GM12878 (cell line): ENCODE measurements at regions of chr12 and their contacts with region 1.

Region 1: DNA sequence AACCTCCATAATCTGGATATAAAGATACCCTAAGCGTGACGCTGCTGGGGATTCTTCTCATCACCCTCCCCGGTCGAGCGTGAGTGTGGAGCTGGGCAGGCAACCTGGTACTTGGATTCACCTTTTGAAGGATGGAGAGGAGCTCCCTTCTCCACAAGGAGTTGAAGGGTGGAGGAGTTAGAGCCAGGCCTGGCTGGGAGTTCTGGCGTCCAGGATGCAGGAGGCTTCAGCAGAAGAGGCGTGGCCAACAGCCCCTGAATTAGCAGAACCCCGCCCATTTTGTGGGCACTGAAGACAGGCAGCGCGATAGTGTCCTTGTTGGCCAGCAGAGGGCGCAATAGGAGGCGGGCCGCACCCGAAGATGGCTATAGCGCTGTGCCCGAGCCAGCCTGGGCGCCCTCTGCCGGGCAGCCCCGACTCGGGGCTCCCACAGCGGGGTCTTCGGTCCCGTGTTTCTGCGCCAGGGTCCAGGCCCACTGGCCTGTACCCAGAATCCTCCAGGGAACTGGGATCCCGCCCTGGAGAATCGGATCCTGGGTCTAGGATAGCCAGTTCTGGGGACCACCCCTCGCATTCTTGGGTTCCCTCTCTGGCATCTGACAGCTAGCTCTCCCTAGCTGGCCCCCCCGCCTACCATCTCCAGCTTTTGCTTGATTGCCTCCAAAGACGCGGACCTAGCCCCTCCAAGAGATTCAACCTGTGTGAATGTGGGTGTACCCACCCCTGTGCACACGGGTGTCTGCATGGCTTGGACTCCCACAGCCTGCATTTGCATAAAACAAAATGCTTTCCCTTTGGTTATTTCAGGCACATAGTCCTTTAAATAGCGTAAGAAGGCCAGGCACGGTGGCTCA is 26.0 kb upstream of the SMUG1 start:
- DNase-seq: peak; percentile 59
- ATAC-seq: peak; percentile 87
- H3K4me3 ChIP-seq: peak overlapping the region; percentile 46; the same call in 1 of the 2 replicates
- H3K27ac ChIP-seq: peak overlapping the region; percentile 39
- H3K4me1 ChIP-seq: peaks cover 33% of the 10 kb centered on the region
- H3K27me3 ChIP-seq: peaks cover 0 to 1% of the 10 kb centered on the region in 2 experiments; a peak in 1 of 4 replicates
- CTCF ChIP-seq: peak; percentile 99 to 100 (median 99); a peak in 5 of 6 replicates
- EP300 ChIP-seq: no peak
- POLR2A ChIP-seq: no peak
- RAD21 ChIP-seq: peak; percentile 50; the same call in 1 of the 2 replicates

Region 2: GRCh38 chr12:53757095-53757770 is 457.5 kb before region 1 on chr12:
- CTCF ChIA-PET with region 1: interaction called, 14 read pairs
- POLR2A ChIA-PET with region 1: no interaction called
- RAD21 ChIA-PET with region 1: no interaction called
- SMC1A ChIA-PET with region 1: interaction called, 3 read pairs
- in situ Hi-C with region 1: no loop called
- intact Hi-C with region 1: loop called (anchors 10 kb)
- DNase-seq: no peak
- ATAC-seq: peak; percentile 74
- H3K4me3 ChIP-seq: peak overlapping the region; percentile 54
- H3K27ac ChIP-seq: peak overlapping the region; percentile 48
- H3K4me1 ChIP-seq: peaks cover 51% of the 10 kb centered on the region
- H3K27me3 ChIP-seq: peaks cover 0 to 5% of the 10 kb centered on the region in 2 experiments; a peak in 1 of 4 replicates
- CTCF ChIP-seq: peak; percentile 96 to 99 (median 98); a peak in 5 of 6 replicates
- EP300 ChIP-seq: no peak
- POLR2A ChIP-seq: no peak
- RAD21 ChIP-seq: peak; percentile 67

Region 3: GRCh38 chr12:54032627-54033100 is 182.1 kb before region 1 on chr12 and contains the start of gene HOXC5:
- CTCF ChIA-PET with region 1: interaction called, 139 read pairs
- POLR2A ChIA-PET with region 1: interaction called, 3 read pairs
- RAD21 ChIA-PET with region 1: interaction called, 23 read pairs
- SMC1A ChIA-PET with region 1: interaction called, 7 read pairs
- in situ Hi-C with region 1: no loop called
- intact Hi-C with region 1: no loop called
- DNase-seq: no peak
- ATAC-seq: peak; percentile 43
- H3K4me3 ChIP-seq: peak within 1 kb of the TSS; percentile 61
- H3K27ac ChIP-seq: no peak within 1 kb of the TSS
- H3K4me1 ChIP-seq: peaks cover 9% of the 10 kb centered on the region; the same call in 1 of the 2 replicates
- H3K27me3 ChIP-seq: peaks cover 3 to 30% of the 10 kb centered on the region in 2 experiments
- CTCF ChIP-seq: peak; percentile 93 to 96 (median 95)
- EP300 ChIP-seq: 0 out of 4 replicates have a peak, but pooled peaks of 1 of the 2 experiments have one; percentile 37
- POLR2A ChIP-seq: no peak
- RAD21 ChIP-seq: peak; percentile 94
- polyA plus RNA-seq, gene HOXC5: not detected

Region 4: DNA sequence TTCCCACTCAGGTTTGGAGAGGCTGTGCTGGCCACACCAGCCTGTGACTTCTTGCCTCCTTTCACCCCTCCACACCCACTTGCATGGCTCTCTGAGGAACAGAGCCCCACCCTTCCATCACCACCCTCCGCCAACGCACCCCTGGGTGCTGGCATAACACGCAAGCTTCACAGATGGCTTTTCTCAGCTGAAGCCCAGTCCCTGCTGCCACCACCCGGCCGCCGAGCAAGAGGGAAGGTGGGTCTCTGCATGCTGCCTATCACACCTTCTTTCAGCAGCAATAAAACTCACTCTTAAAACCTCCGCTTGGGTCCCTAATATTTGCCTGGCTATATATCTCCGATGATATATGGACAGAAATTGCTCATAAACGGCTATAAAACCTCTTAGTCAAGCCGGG is 67.6 kb before region 1 on chr12:
- CTCF ChIA-PET with region 1: no interaction called
- POLR2A ChIA-PET with region 1: no interaction called
- RAD21 ChIA-PET with region 1: no interaction called
- SMC1A ChIA-PET with region 1: no interaction called
- in situ Hi-C with region 1: no loop called
- intact Hi-C with region 1: no loop called
- DNase-seq: no peak
- ATAC-seq: peak; percentile 48
- H3K4me3 ChIP-seq: no peak overlapping the region
- H3K27ac ChIP-seq: no peak overlapping the region
- H3K4me1 ChIP-seq: no peaks in the 10 kb centered on the region
- H3K27me3 ChIP-seq: peaks cover 0 to 4% of the 10 kb centered on the region in 2 experiments; a peak in 3 of 4 replicates
- CTCF ChIP-seq: peak in 1 of 3 experiments; percentile 31; a peak in 2 of 6 replicates
- EP300 ChIP-seq: no peak
- POLR2A ChIP-seq: no peak
- RAD21 ChIP-seq: no peak

Region 5: GRCh38 chr12:54229624-54230212 is 14.9 kb after region 1 on chr12:
- CTCF ChIA-PET with region 1: interaction called, 11 read pairs
- POLR2A ChIA-PET with region 1: no interaction called
- RAD21 ChIA-PET with region 1: interaction called, 3 read pairs
- SMC1A ChIA-PET with region 1: interaction called, 9 read pairs
- in situ Hi-C with region 1: no loop called
- intact Hi-C with region 1: no loop called
- DNase-seq: no peak
- ATAC-seq: peak; percentile 81
- H3K4me3 ChIP-seq: no peak overlapping the region
- H3K27ac ChIP-seq: no peak overlapping the region
- H3K4me1 ChIP-seq: peaks cover 5% of the 10 kb centered on the region; the same call in 1 of the 2 replicates
- H3K27me3 ChIP-seq: no peaks in the 10 kb centered on the region
- CTCF ChIP-seq: no peak
- EP300 ChIP-seq: no peak
- POLR2A ChIP-seq: no peak
- RAD21 ChIP-seq: no peak

Region 6: DNA sequence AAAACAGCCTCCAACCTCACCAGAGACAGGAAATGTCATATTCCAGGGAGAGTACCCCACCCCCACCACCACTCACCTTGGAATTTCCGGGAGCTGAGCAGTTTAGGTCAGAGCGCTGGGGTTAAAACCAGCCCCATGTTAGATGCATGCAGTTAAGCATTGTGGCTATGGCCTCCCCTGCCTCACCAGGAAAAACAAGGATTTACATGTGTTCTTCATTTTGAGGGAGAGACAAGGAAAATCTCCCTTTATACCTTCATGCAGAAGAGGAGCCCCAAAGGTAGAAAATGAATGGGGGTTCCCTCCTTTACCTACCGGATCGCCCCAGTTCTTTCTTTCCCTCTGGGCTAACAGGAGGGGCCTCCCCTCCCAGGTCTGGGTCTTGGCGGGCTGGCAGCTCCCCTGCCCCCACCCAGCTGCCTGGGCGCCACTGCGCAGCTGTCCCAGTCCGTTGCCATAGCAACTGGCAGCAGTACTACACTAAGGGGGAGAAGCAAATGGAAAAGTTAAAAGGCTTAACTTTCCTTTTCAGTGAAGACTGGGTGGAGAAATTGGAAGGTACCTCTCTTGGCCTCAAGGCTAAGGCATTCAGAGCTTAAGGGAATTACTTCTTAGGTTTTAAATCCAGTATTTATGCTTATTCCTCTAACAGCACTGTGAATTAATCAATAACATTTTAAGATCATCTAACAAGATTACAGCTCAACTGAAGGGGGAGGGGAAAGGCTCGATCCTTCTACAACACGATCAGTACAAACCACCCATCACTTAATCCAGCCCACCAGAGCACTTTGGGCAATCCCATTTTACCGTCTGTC is 44.6 kb after region 1 on chr12:
- CTCF ChIA-PET with region 1: interaction called, 26 read pairs
- POLR2A ChIA-PET with region 1: no interaction called
- RAD21 ChIA-PET with region 1: interaction called, 3 read pairs
- SMC1A ChIA-PET with region 1: interaction called, 4 read pairs
- in situ Hi-C with region 1: no loop called
- intact Hi-C with region 1: no loop called
- DNase-seq: peak; percentile 42
- ATAC-seq: peak; percentile 97
- H3K4me3 ChIP-seq: peak overlapping the region; percentile 48
- H3K27ac ChIP-seq: peak overlapping the region; percentile 30
- H3K4me1 ChIP-seq: peaks cover 17% of the 10 kb centered on the region
- H3K27me3 ChIP-seq: no peaks in the 10 kb centered on the region
- CTCF ChIP-seq: no peak
- EP300 ChIP-seq: peak in 1 of 2 experiments; percentile 56; a peak in 1 of 4 replicates
- POLR2A ChIP-seq: no peak
- RAD21 ChIP-seq: no peak

Region 7: DNA sequence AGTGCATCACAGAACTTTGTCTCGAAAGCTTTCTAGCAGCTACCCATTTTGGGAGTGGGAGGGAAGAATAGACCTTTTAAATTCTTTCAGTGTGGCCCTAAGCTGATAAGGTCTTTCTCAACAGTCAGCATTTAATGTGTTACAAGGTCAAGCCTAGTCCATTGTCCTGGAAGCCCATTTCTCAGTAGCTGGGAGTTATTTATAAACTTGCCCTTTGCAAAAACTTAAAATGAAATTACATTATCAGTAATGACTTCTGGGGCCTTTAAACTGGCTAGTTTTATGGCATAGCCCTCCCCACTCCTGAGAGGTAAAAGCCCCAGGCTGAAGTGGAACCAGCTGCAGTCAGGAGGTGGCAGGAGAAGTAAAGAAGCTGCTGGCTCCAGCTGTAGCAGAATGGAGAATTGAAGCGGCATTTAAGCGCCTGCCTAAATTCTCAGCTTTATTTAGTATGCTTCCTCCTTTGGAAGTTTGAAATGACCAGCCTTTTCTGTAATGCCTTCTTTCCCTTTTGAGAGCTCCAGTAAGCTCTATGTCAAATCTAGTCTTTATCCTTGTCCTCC is 122.6 kb after region 1 on chr12:
- CTCF ChIA-PET with region 1: interaction called, 23 read pairs
- POLR2A ChIA-PET with region 1: no interaction called
- RAD21 ChIA-PET with region 1: interaction called, 3 read pairs
- SMC1A ChIA-PET with region 1: interaction called, 4 read pairs
- in situ Hi-C with region 1: no loop called
- intact Hi-C with region 1: no loop called
- DNase-seq: no peak
- ATAC-seq: no peak
- H3K4me3 ChIP-seq: no peak overlapping the region
- H3K27ac ChIP-seq: no peak overlapping the region
- H3K4me1 ChIP-seq: no peaks in the 10 kb centered on the region
- H3K27me3 ChIP-seq: no peaks in the 10 kb centered on the region
- CTCF ChIP-seq: 0 out of 6 replicates have a peak, but pooled peaks of 1 of the 3 experiments have one; percentile 5
- EP300 ChIP-seq: no peak
- POLR2A ChIP-seq: no peak
- RAD21 ChIP-seq: 0 out of 2 replicates have a peak, but pooled peaks have one; percentile 16

Region 8: DNA sequence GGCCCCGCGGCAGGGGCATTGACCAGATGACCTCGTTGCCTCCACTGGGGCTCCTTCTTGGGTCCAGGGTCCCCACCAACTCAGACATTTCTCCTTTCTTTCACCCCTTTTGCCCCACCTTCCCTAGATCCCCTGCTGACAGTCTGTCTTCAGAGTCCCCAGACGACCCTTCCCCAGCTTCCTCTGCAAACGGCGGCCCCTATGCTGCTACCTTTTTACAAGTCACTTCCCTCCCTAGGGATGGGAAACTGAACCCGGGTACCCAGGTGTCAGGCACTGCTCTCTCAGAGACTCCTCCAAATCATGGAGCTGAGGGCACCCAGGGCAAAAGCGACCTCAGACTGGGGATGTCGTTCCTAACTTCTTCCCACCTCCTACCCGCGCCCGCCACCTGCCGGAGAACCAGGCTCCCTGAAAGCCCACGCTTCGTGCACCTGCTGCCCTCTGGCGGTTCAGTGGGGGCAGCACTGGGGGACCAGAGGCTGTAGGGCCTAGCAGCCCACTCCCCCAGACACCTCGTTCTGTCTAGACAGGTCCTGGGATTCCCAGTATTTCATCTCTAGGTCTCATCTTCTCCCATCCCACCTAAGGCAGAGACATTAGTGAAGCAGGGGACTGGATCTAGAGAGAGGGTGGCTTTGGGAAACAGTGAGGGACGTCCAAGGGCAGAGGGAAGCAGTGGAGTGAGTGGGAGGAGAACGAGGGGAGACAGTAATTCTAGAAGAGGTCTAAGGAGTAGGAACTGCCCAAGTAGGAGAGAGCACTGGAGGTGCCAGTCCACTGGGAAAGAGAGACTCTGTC is 164.8 kb after region 1 on chr12:
- CTCF ChIA-PET with region 1: interaction called, 36 read pairs
- POLR2A ChIA-PET with region 1: no interaction called
- RAD21 ChIA-PET with region 1: interaction called, 4 read pairs
- SMC1A ChIA-PET with region 1: interaction called, 7 read pairs
- in situ Hi-C with region 1: no loop called
- intact Hi-C with region 1: no loop called
- DNase-seq: no peak
- ATAC-seq: peak; percentile 95
- H3K4me3 ChIP-seq: no peak overlapping the region
- H3K27ac ChIP-seq: no peak overlapping the region
- H3K4me1 ChIP-seq: peaks cover 4% of the 10 kb centered on the region
- H3K27me3 ChIP-seq: no peaks in the 10 kb centered on the region
- CTCF ChIP-seq: peak; percentile 100; a peak in 5 of 6 replicates
- EP300 ChIP-seq: no peak
- POLR2A ChIP-seq: no peak
- RAD21 ChIP-seq: peak; percentile 73

Region 9: DNA sequence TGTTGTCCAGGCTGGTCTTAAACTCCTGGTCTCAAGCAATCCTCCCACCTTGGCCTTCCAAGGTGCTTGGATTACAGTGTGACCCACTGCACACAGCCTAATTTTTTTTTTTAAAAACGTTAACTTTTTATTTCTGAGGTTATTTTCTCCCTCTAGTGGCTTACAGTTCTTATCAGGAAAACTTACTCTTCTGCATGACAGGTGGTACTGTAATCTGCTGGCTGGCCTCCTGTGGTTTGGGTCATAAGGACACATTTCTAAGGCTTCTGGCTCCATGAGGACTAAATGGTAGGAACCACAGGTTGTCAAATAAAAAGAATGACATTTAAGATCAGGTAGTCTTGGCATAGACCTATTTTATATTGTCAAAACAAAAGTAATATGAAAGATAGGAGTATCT is 275.1 kb after region 1 on chr12:
- CTCF ChIA-PET with region 1: no interaction called
- POLR2A ChIA-PET with region 1: no interaction called
- RAD21 ChIA-PET with region 1: no interaction called
- SMC1A ChIA-PET with region 1: no interaction called
- in situ Hi-C with region 1: no loop called
- intact Hi-C with region 1: no loop called
- DNase-seq: no peak
- ATAC-seq: no peak
- H3K4me3 ChIP-seq: no peak overlapping the region
- H3K27ac ChIP-seq: no peak overlapping the region
- H3K4me1 ChIP-seq: no peaks in the 10 kb centered on the region
- H3K27me3 ChIP-seq: no peaks in the 10 kb centered on the region
- CTCF ChIP-seq: no peak
- EP300 ChIP-seq: no peak
- POLR2A ChIP-seq: no peak
- RAD21 ChIP-seq: no peak